ENCODE measurements at regions of chr7 and their contacts with region 1.

Region 1: GRCh38 chr7:4775250-4775847 is at the start of gene AP5Z1:
- DNase-seq: peak; percentile 95
- H3K4me3 Mint-ChIP-seq: peak within 1 kb of the TSS; percentile 99
- H3K27ac Mint-ChIP-seq: peak within 1 kb of the TSS; percentile 96
- H3K4me1 Mint-ChIP-seq: peaks cover 43% of the 10 kb centered on the region
- H3K27me3 Mint-ChIP-seq: no peaks in the 10 kb centered on the region
- total RNA-seq, gene AP5Z1: 57.5 to 60.6 TPM

Region 2: DNA sequence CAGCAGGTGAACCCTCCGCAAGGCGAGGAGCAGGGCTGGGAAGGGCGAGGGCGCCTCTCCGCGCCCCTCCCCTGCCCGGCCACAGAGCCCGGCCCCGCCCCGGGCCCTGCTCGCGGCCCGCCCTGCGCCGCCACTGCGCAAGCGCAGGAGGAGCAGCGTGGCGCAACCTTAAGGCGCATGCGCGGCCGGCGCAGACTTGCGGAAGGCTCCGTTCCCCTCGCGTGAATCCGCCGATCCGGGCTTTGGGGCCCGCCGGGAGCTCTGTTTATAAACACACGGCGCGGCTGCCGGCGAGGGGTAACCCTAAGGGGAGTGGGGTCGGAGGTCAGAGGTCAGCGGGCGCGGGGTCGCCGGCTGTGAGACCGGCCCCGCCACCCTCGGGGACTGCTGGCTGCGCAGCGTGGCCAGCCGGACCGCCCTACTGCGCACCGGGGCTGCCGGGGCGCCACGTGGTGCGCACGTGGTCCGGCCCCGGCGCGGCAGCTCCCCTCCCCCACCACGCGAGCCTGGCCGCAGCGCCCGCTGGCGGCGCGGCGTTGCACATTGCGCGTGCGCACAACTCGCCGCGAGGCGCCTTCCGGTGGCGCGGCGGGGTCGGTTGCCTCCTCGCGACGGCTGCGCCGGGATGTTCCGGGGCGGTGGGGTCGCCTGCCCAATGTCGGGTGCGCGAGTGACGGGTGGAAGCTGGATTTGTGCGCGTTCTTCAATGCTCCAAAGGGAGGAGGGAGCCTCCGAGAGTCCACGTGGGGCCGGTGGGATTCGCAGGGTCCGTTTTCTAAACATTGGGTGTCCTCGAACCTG is 133.5 kb before region 1 on chr7:
- CTCF ChIA-PET with region 1: interaction called, 9 read pairs
- POLR2A ChIA-PET with region 1: interaction called, 41 read pairs
- DNase-seq: peak; percentile 95
- H3K4me3 Mint-ChIP-seq: peak overlapping the region; percentile 87
- H3K27ac Mint-ChIP-seq: peak overlapping the region; percentile 89
- H3K4me1 Mint-ChIP-seq: peaks cover 25% of the 10 kb centered on the region
- H3K27me3 Mint-ChIP-seq: no peaks in the 10 kb centered on the region

Region 3: GRCh38 chr7:4738711-4739527 is 36.4 kb before region 1 on chr7:
- CTCF ChIA-PET with region 1: no interaction called
- POLR2A ChIA-PET with region 1: interaction called, 79 read pairs
- DNase-seq: no peak
- H3K4me3 Mint-ChIP-seq: peak overlapping the region; percentile 56
- H3K27ac Mint-ChIP-seq: peak overlapping the region; percentile 67
- H3K4me1 Mint-ChIP-seq: peaks cover 50% of the 10 kb centered on the region
- H3K27me3 Mint-ChIP-seq: no peaks in the 10 kb centered on the region

Region 4: GRCh38 chr7:4753711-4754432 is 21.5 kb before region 1 on chr7:
- CTCF ChIA-PET with region 1: interaction called, 10 read pairs
- POLR2A ChIA-PET with region 1: interaction called, 79 read pairs
- DNase-seq: peak; percentile 86
- H3K4me3 Mint-ChIP-seq: no peak overlapping the region
- H3K27ac Mint-ChIP-seq: no peak overlapping the region
- H3K4me1 Mint-ChIP-seq: peaks cover 17% of the 10 kb centered on the region
- H3K27me3 Mint-ChIP-seq: no peaks in the 10 kb centered on the region

Region 5: DNA sequence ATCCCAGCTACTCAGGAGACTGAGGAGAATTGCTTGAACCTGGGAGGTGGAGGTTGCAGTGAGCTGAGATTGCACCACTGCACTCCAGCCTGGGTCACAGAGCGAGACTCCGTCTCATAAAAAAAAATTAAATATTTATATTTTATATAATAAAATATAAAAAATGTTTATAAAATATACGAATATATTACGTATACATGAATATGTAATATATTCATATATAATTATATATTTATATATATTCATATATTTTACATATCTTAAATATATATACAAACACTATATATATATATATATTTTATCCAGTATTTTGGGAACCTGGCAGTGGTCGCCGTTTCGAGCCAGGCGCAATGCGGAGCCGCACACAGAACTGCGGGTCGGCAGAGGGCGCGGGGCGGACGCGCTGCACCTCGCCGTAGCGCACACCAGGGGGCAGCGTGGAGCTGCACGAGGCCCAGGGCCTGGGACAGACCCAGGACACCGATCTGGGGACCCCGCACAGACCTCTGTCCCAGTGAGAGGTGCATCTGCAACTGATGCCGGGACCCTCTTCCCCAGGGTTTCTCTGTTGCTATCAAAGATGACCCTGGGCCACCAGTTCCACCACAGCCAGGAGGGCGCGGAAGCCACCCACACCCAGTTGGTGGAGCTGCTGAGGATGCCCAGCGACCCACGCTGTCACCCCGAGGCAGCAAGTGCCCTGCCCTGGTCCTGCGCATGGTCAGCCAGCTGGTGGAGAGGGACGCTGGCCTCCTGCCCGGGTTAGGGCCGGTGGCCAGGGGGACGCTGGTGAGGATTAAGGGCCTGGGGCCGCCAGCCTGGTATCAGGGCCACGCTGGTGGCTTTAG is 22.7 kb after region 1 on chr7:
- CTCF ChIA-PET with region 1: interaction called, 16 read pairs
- POLR2A ChIA-PET with region 1: interaction called, 49 read pairs
- DNase-seq: peak; percentile 64
- H3K4me3 Mint-ChIP-seq: no peak overlapping the region
- H3K27ac Mint-ChIP-seq: no peak overlapping the region
- H3K4me1 Mint-ChIP-seq: no peaks in the 10 kb centered on the region
- H3K27me3 Mint-ChIP-seq: no peaks in the 10 kb centered on the region

Region 6: DNA sequence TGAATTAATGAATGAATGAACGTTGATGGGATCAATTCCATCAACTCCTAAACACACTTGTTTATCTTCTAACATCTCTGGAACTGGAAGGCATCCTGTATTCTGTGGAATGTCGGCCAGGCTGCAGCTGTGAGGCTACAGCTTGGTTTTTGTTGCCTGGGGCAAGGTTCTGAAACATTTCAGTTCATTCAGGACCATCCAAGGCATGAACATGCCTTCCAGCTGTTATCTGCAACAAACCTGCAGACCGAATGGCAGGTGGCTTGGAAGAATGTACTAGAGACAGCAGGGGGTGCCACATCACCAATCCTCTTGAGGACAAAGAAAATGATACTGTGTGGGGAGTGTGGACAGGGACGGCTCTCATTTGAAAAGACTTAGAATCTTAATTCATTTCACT is 74.0 kb after region 1 on chr7:
- CTCF ChIA-PET with region 1: no interaction called
- POLR2A ChIA-PET with region 1: no interaction called
- DNase-seq: peak; percentile 24
- H3K4me3 Mint-ChIP-seq: no peak overlapping the region
- H3K27ac Mint-ChIP-seq: no peak overlapping the region
- H3K4me1 Mint-ChIP-seq: peaks cover 8% of the 10 kb centered on the region
- H3K27me3 Mint-ChIP-seq: peaks cover 4% of the 10 kb centered on the region